HCT116 (cell line): ENCODE measurements at regions of chrX and their contacts with region 1.

Region 1: GRCh38 chrX:9708904-9709553 is 56.6 kb downstream of the GPR143 start:
- DNase-seq: peak; percentile 15
- ATAC-seq: peak; percentile 86
- H3K4me3 ChIP-seq: no peak overlapping the region
- H3K27ac ChIP-seq: no peak overlapping the region
- H3K4me1 ChIP-seq: no peaks in the 10 kb centered on the region
- H3K27me3 ChIP-seq: no peaks in the 10 kb centered on the region
- CTCF ChIP-seq: peak; percentile 44 to 66 (median 63); a peak in 5 of 6 replicates
- POLR2A ChIP-seq: no peak
- RAD21 ChIP-seq: peak; percentile 74

Region 2: DNA sequence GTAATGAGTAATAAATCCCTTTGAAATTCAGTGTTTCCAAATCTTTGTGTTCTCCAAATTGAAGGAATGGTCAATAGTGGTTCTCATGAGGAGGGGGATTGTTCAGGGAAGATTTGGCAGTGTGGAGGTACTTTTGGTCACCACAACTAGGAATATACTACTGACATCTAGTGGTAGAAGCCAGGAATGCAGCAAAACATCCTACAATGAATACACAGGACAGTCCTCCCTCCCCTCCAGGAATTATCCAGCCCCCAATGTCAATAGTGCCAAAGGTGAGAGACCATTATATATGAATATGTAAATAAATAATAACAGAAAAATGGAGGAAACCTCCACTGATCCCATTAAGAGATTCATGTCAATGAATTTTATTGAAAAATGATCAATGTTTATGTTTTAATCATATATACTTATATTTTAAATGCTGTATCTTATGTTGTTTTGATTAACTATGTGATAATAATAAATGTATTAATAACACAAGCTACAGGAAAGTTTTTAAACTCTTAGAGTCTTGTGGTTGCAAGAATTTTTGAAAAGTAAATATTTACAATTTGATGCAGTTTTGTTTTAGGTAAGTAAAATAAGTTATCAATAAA is 893.5 kb before region 1 on chrX:
- CTCF ChIA-PET with region 1: no interaction called
- POLR2A ChIA-PET with region 1: no interaction called
- RAD21 ChIA-PET with region 1: no interaction called
- intact Hi-C with region 1: loop called (anchors 5 kb)
- DNase-seq: peak; percentile 2
- ATAC-seq: peak; percentile 30; the same call in 1 of the 2 replicates
- H3K4me3 ChIP-seq: no peak overlapping the region
- H3K27ac ChIP-seq: no peak overlapping the region
- H3K4me1 ChIP-seq: no peaks in the 10 kb centered on the region
- H3K27me3 ChIP-seq: no peaks in the 10 kb centered on the region
- CTCF ChIP-seq: peak; percentile 19 to 46 (median 45); a peak in 5 of 6 replicates
- POLR2A ChIP-seq: no peak
- RAD21 ChIP-seq: peak; percentile 39

Region 3: DNA sequence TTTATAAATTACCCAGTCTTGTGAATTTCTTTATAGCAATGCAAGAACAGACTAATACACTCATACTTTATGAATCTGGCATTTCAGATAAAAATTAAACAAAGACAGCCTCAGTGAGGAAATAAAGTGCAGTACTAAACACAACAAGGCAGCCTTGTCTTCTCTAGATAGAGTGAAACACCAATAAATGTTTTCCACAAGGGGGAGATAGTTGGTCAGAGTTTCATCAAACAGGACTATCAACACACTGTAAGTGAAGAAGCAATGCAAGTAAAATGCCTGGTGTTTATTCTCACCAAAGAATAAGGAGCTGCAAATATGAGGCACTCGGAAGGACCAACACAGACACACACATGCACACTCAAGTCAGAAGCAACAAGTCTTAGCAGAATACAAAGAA is 737.9 kb before region 1 on chrX:
- CTCF ChIA-PET with region 1: no interaction called
- POLR2A ChIA-PET with region 1: no interaction called
- RAD21 ChIA-PET with region 1: no interaction called
- intact Hi-C with region 1: loop called (anchors 2 kb)
- DNase-seq: peak; percentile 13
- ATAC-seq: peak; percentile 66; the same call in 1 of the 2 replicates
- H3K4me3 ChIP-seq: no peak overlapping the region
- H3K27ac ChIP-seq: no peak overlapping the region
- H3K4me1 ChIP-seq: no peaks in the 10 kb centered on the region
- H3K27me3 ChIP-seq: no peaks in the 10 kb centered on the region
- CTCF ChIP-seq: peak in 2 of 3 experiments; percentile 7 to 24; a peak in 1 of 6 replicates
- POLR2A ChIP-seq: no peak
- RAD21 ChIP-seq: peak; percentile 48

Region 4: GRCh38 chrX:9352694-9353411 is 356.2 kb before region 1 on chrX:
- CTCF ChIA-PET with region 1: no interaction called
- POLR2A ChIA-PET with region 1: no interaction called
- RAD21 ChIA-PET with region 1: no interaction called
- intact Hi-C with region 1: loop called (anchors 10 kb)
- DNase-seq: no peak
- ATAC-seq: no peak
- H3K4me3 ChIP-seq: no peak overlapping the region
- H3K27ac ChIP-seq: no peak overlapping the region
- H3K4me1 ChIP-seq: peaks cover 5 to 15% of the 10 kb centered on the region in 2 experiments; a peak in 3 of 4 replicates
- H3K27me3 ChIP-seq: no peaks in the 10 kb centered on the region
- CTCF ChIP-seq: no peak
- POLR2A ChIP-seq: no peak
- RAD21 ChIP-seq: no peak

Region 5: DNA sequence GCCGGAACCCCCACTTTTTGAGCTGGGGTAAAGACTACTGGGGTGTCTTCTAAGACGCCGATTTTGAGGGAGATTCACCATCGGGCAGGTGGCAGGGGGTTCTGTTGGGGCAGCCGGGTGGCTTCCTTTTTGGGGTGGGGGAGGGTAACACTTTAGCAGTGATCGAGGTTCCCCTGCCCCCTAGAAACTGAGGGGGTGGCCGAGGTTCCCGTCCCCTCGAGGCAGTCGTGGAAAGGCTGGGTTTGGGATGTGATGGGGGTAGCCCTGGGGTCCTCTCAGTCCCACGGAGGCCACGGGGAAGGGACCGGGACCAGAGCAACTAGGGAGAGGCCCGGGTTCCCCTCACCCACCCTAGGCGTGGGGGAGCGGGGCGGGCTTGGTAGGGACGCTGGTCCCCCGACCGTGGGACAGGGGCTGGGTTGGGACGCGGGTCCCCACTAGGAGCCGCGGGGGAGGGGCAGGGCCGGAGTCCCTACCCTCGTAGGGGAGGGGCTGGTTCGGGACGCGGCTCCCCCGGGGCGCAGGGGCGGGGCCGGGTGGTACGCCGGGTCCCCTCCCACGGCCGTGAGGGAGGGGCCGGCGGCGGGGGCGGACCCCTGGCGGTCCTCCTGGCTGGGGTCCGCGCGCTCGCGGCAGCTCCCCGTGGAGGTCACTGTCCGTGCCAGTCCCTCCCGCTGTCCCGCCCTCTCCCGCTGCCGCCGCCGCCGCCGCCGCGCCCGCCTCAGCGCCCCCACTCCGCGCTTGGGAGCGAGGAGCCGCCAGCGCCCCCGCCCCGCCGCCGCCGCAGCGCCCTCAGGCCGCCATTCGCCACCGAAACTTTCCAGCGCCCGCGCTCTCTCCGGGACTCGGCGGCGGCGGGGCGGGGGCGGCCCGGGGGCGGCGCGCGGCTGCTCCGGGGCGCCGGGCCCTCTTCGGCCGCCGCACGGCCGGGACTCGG is 244.3 kb before region 1 on chrX and contains the start of gene TBL1X:
- CTCF ChIA-PET with region 1: no interaction called
- POLR2A ChIA-PET with region 1: no interaction called
- RAD21 ChIA-PET with region 1: no interaction called
- intact Hi-C with region 1: loop called (anchors 5 kb)
- DNase-seq: no peak
- ATAC-seq: peak; percentile 68
- H3K4me3 ChIP-seq: peak within 1 kb of the TSS; percentile 52 to 63
- H3K27ac ChIP-seq: peak within 1 kb of the TSS; percentile 78
- H3K4me1 ChIP-seq: peaks cover 2 to 33% of the 10 kb centered on the region in 2 experiments; a peak in 3 of 4 replicates
- H3K27me3 ChIP-seq: no peaks in the 10 kb centered on the region
- CTCF ChIP-seq: no peak
- POLR2A ChIP-seq: no peak
- RAD21 ChIP-seq: no peak
- total RNA-seq, gene TBL1X: 37.8 TPM